MCF 10A (cell line): ENCODE measurements at regions of chr15 and their contacts with region 1.

Region 1: DNA sequence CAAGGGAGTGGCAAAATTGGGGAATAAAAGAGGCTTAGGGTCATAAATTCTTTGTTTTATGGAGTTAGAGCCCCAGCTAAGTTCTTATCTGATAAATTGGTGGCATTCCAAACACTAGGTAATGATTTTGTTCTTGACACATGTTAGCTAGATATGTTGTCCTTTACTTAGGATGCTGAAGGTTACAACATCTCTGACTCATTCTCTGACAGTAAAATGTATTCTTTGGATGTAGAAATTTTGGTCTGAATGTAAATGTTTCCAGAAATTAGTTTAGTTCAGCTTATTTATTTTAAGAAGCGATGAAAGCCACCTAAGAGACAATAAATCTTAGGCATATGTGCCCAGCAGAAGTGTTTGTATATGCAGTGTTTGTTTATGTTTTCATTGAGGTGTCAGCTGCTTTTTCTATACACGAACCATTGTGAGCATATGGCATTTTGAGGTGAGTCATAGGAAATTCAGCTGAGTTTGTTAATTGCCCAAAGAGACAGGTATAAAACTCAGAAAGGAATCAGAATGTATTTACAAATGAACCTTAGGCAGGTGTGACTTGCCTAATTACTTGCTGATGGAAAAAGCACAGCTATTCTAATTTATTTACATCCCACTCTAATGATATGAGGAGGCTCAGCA is 247.7 kb downstream of the AGBL1 start:
- DNase-seq: peak; percentile 74
- H3K4me3 Mint-ChIP-seq: no peak overlapping the region
- H3K27ac Mint-ChIP-seq: peak overlapping the region; percentile 87
- H3K4me1 Mint-ChIP-seq: peaks cover 23% of the 10 kb centered on the region
- H3K27me3 Mint-ChIP-seq: no peaks in the 10 kb centered on the region
- CTCF ChIP-seq: no peak

Region 2: DNA sequence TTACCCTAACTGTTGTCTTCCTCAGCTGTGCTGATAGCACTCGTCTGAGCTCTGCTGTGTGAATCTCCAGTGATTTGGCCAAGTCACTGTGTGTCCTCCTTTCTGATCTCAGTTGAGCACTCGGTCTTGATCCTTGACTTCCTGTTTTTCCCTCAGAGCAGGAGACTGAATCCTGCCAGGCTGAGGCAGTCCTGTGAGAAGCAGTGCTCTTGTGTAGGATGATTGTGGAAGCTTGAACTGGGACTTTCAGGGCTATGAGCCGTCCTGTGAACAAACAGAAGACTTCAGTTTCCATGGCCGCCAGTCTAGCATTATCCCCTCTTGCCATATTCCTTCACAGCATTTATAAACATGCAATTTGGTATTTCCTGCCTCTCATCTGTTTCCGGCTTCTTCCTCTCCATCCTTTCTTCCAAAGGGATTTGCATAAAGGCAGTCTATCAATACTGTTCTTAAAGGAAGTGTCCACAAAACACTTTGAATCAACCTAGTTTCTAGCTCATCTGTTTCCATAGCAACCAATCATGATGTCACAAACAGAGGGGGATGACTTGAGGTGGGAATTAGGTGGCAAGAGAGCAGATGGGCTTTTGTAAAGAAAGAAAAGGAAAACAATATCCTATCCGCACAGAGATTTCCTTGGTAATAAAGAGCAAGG is 10.5 kb before region 1 on chr15:
- CTCF ChIA-PET with region 1: interaction called, 3 read pairs
- POLR2A ChIA-PET with region 1: interaction called, 20 read pairs
- intact Hi-C with region 1: no loop called
- DNase-seq: no peak
- H3K4me3 Mint-ChIP-seq: peak overlapping the region; percentile 47
- H3K27ac Mint-ChIP-seq: peak overlapping the region; percentile 91
- H3K4me1 Mint-ChIP-seq: peaks cover 15% of the 10 kb centered on the region
- H3K27me3 Mint-ChIP-seq: no peaks in the 10 kb centered on the region
- CTCF ChIP-seq: no peak

Region 3: GRCh38 chr15:86347245-86347644 is 19.9 kb after region 1 on chr15:
- CTCF ChIA-PET with region 1: interaction called, 3 read pairs
- POLR2A ChIA-PET with region 1: interaction called, 19 read pairs
- intact Hi-C with region 1: no loop called
- DNase-seq: peak; percentile 84
- H3K4me3 Mint-ChIP-seq: no peak overlapping the region
- H3K27ac Mint-ChIP-seq: no peak overlapping the region
- H3K4me1 Mint-ChIP-seq: peaks cover 18% of the 10 kb centered on the region
- H3K27me3 Mint-ChIP-seq: no peaks in the 10 kb centered on the region
- CTCF ChIP-seq: no peak

Region 4: DNA sequence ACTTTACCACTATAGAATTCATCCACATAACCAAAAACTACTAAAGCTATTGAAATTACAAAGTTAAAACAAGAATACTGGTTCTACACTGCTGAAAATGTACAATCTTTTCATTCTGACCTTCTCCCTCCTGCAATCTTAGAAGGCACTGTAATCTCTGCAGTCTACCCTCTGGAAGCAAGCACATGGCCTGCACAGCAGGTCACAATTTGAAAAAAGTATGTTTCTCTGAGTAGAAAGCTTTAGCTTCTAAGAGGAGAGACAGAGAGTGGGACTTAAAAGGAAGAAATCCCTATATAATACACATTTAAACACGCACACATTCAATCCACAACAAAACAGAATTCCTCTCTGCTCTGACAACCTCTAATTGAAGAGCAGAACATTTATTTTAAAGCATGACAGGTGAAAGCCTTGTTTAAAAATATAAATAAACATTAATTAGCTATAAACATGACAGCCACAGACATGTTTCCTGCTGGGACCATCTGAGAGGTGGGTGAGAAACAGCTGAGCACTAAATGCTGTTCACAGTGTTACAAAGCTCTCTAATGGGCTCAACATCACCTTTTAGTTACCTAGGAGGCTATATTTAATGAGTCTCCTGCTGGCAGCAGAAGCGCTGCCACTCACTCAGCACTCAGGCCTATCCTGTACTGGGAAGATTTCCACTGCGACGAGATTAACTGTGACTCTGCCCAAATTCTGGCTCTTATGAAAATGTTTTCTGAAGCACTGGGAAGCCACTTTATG is 199.8 kb after region 1 on chr15:
- CTCF ChIA-PET with region 1: no interaction called
- POLR2A ChIA-PET with region 1: no interaction called
- intact Hi-C with region 1: no loop called
- DNase-seq: no peak
- H3K4me3 Mint-ChIP-seq: no peak overlapping the region
- H3K27ac Mint-ChIP-seq: no peak overlapping the region
- H3K4me1 Mint-ChIP-seq: no peaks in the 10 kb centered on the region
- H3K27me3 Mint-ChIP-seq: no peaks in the 10 kb centered on the region
- CTCF ChIP-seq: no peak